ENCODE measurements at regions of chr16 and their contacts with region 1.

Region 1: GRCh38 chr16:56203052-56203451 is 11.8 kb downstream of the GNAO1 start:
- DNase-seq: peak; percentile 82
- ATAC-seq: peak; percentile 85
- H3K4me3 Mint-ChIP-seq: no peak overlapping the region
- H3K27ac Mint-ChIP-seq: no peak overlapping the region
- H3K4me1 Mint-ChIP-seq: peaks cover 23% of the 10 kb centered on the region
- H3K27me3 Mint-ChIP-seq: peaks cover 3% of the 10 kb centered on the region

Region 2: DNA sequence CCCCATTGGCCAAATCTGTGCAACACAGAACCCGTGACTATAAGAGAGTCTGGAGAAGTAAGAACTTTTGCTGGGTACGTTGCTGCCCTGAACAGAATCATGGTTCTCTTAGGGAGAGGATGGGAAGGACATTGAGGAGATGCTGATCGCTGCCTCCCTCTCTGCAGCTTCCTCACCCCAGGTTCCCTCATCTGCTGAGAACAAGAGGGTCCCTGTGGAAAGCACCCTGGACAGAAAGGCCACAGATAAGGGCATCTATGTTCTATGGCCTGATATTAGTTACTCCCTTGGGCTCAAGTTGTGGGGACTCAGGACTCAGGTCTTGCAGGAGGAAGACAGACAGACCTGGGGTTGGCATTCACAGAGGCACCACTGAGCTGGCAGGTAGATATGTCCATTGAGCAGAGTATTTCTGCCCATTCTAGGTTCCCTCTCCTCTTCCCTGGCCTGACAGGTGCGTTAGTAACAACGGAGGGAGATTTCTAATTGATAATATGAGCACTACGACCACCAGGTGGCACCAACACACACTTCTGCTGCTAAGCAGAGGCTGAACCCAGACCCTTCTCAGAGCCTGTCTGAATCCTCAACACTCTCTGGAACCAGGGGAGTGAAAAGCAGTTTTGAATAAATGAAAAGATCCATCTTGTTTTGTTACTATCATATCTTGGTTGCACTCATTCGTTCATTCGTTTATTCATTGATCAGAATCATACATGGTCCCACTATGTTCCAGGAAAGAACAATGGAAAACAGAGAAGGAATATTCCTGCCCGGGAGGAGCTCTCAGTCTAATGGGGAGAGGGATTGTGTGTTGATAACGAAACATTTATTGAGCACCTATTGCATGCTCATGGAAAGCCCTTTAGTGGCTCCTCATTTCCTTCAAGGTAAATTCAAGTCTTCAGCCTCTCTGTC is 490.8 kb before region 1 on chr16:
- CTCF ChIA-PET with region 1: no interaction called
- POLR2A ChIA-PET with region 1: no interaction called
- intact Hi-C with region 1: loop called in 1 of 2 experiments (anchors 2 kb)
- DNase-seq: peak; percentile 79
- ATAC-seq: peak; percentile 64
- H3K4me3 Mint-ChIP-seq: no peak overlapping the region
- H3K27ac Mint-ChIP-seq: no peak overlapping the region
- H3K4me1 Mint-ChIP-seq: no peaks in the 10 kb centered on the region
- H3K27me3 Mint-ChIP-seq: peaks cover 13% of the 10 kb centered on the region

Region 3: DNA sequence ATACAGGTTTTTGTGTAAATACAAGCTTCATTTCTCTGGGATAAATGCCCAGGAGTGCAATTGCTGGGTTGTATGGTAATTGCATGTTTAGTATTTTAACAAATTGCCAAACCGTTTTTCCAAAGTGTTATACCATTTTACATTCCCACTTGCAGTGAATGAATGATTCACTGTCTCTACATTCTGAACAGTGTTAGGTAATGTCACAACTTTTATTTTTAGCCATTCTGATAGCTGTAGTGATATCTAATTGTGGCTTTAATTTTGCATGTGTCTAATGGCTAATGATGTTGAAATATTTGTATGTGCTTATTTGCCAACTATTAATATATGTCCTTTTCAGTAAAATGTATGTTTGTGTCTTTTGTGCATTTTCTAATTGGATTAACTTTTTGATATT is 171.0 kb before region 1 on chr16:
- CTCF ChIA-PET with region 1: no interaction called
- POLR2A ChIA-PET with region 1: no interaction called
- intact Hi-C with region 1: loop called in 1 of 2 experiments (anchors 5 kb)
- DNase-seq: no peak
- ATAC-seq: no peak
- H3K4me3 Mint-ChIP-seq: no peak overlapping the region
- H3K27ac Mint-ChIP-seq: no peak overlapping the region
- H3K4me1 Mint-ChIP-seq: no peaks in the 10 kb centered on the region
- H3K27me3 Mint-ChIP-seq: peaks cover 21% of the 10 kb centered on the region

Region 4: DNA sequence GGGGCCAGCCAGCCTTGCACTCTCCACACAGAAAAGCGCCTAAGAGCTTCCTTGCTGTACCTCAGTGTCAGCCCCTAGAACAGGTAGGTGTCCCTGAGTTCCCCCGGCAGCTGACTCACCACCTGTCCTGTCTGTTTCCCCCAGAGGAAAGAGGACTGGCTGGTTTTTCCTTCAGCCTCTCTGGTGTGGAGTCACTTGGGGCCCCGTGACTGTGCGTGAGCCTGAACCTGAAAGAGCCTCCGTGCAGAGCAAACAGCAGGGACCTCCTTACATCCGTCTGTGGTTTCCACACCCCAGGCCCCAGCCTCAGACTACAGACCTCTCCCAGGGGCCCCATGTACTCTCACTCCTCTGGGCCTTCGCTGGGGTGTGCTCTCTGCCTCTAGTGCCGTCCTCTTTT is 76.1 kb after region 1 on chr16:
- CTCF ChIA-PET with region 1: interaction called, 6 read pairs
- POLR2A ChIA-PET with region 1: no interaction called
- intact Hi-C with region 1: loop called in 1 of 2 experiments (anchors 2 kb)
- DNase-seq: peak; percentile 80
- ATAC-seq: peak; percentile 95
- H3K4me3 Mint-ChIP-seq: no peak overlapping the region
- H3K27ac Mint-ChIP-seq: peak overlapping the region; percentile 55
- H3K4me1 Mint-ChIP-seq: peaks cover 23% of the 10 kb centered on the region
- H3K27me3 Mint-ChIP-seq: no peaks in the 10 kb centered on the region

Region 5: DNA sequence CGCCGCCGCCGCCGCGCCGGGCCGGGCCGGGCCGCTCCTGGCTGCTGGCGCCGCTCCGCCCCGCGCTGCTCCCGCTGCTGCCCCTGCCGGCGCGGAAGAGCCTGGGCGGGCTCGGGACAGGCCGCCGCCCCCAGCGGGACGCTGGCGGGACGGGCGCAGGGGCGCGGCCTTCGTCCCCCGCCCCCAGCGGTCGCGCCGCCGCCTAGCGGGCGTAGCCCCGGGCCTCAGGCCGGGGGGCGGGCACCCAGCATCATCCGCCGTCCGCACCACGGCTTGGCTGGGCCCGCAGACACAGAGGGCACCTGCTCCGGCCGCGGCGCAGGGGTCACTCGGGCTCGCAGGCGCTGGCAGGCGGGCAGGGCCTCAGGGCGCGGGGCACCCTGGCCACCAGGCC is 222.4 kb after region 1 on chr16 and contains the start of gene AMFR:
- CTCF ChIA-PET with region 1: no interaction called
- POLR2A ChIA-PET with region 1: no interaction called
- intact Hi-C with region 1: loop called in 1 of 2 experiments (anchors 5 kb)
- DNase-seq: peak; percentile 80
- ATAC-seq: peak; percentile 97
- H3K4me3 Mint-ChIP-seq: peak within 1 kb of the TSS; percentile 90
- H3K27ac Mint-ChIP-seq: peak within 1 kb of the TSS; percentile 82
- H3K4me1 Mint-ChIP-seq: peaks cover 54% of the 10 kb centered on the region
- H3K27me3 Mint-ChIP-seq: no peaks in the 10 kb centered on the region
- total RNA-seq, gene AMFR: 34.0 to 48.0 TPM

Measured in activated CD4-positive, alpha-beta T cell treated with anti-CD3 and anti-CD28 coated beads for 36 hours (primary cell).